ENCODE measurements at regions of chr15 and their contacts with region 1.

Region 1: DNA sequence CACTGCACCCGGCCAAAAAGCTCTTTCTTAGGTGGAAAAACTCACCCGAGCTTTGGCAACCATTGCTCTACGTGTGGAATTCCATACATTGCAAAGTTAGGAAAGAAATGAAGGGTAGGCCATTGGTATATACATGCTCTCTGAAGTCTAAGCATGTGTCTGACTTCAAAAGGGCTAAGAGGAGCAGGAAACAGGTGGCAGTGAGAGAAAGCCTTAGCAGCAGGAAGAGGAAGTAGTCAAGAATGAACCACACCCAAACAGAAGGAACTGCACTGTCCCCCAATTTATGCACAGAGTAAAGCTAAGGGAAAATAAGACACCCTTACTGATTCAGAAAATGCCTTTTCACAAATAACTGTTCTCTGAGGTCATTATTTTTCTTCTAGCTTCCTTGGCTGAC is 575.5 kb downstream of the NTRK3 start:
- DNase-seq: no peak
- ATAC-seq: no peak
- H3K4me3 ChIP-seq: no peak overlapping the region
- H3K27ac ChIP-seq: no peak overlapping the region
- H3K4me1 ChIP-seq: peaks cover 0 to 8% (median 0%) of the 10 kb centered on the region in 12 donors
- H3K27me3 ChIP-seq: no peaks in the 10 kb centered on the region
- CTCF ChIP-seq: no peak
- POLR2A ChIP-seq: no peak

Region 2: GRCh38 chr15:87743562-87743961 is 62.5 kb after region 1 on chr15:
- intact Hi-C with region 1: loop called in 2 of 10 experiments (anchors 10 kb)
- DNase-seq: no peak
- ATAC-seq: no peak
- H3K4me3 ChIP-seq: no peak overlapping the region
- H3K27ac ChIP-seq: no peak overlapping the region
- H3K4me1 ChIP-seq: no peaks in the 10 kb centered on the region
- H3K27me3 ChIP-seq: peaks cover 0 to 4% (median 0%) of the 10 kb centered on the region in 9 donors
- CTCF ChIP-seq: no peak
- POLR2A ChIP-seq: no peak

Region 3: GRCh38 chr15:87752250-87752951 is 71.3 kb after region 1 on chr15:
- intact Hi-C with region 1: loop called in 2 of 10 experiments (anchors 10 kb)
- DNase-seq: no peak
- ATAC-seq: peak in 3 of 4 donors; percentile 45 to 70 (median 67)
- H3K4me3 ChIP-seq: no peak overlapping the region
- H3K27ac ChIP-seq: no peak overlapping the region
- H3K4me1 ChIP-seq: peaks cover 0 to 17% (median 8%) of the 10 kb centered on the region in 12 donors
- H3K27me3 ChIP-seq: no peaks in the 10 kb centered on the region
- CTCF ChIP-seq: no peak
- POLR2A ChIP-seq: no peak

Measured in heart left ventricle (tissue), 16 donors.